ENCODE measurements at regions of chr2 and their contacts with region 1.

Region 1: DNA sequence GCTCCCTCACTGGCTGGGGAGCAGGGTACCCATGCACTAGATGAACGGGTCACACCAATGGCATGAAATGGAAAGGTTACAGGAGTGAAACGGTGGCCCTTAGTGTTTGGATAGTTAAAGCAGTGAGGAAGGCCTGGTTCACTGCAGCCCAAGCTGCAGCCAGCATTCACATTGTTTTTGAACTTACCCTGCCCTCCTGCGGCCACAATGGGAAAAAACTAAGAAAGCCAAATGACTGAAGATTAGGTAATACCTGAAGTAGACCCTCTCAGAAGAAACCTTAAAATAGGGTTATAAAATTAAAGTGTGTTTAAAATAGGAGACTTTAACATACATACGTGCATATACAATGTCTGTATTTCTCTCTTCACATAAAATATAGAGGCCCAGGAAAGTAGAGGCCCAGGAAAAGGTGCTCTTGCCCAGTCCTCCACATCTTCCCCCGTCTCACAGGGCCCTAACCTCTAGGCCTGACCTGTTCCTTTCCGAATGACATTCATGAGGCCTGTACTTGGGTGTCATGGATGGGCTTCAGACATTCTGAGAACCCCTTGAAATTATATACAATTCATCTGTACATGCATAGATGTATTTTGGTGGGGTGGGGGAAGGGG is 33.3 kb downstream of the DOK1 start:
- DNase-seq: peak; percentile 48 to 62 (median 60)
- ATAC-seq: peak; percentile 71 to 92 (median 92)
- H3K4me3 ChIP-seq: no peak overlapping the region
- H3K27ac ChIP-seq: no peak overlapping the region
- H3K4me1 ChIP-seq: peaks cover 0 to 37% (median 0%) of the 10 kb centered on the region in 12 donors
- H3K27me3 ChIP-seq: peaks cover 0 to 34% (median 8%) of the 10 kb centered on the region in 9 donors
- CTCF ChIP-seq: peak; percentile 48 to 85 (median 74)
- POLR2A ChIP-seq: no peak

Region 2: DNA sequence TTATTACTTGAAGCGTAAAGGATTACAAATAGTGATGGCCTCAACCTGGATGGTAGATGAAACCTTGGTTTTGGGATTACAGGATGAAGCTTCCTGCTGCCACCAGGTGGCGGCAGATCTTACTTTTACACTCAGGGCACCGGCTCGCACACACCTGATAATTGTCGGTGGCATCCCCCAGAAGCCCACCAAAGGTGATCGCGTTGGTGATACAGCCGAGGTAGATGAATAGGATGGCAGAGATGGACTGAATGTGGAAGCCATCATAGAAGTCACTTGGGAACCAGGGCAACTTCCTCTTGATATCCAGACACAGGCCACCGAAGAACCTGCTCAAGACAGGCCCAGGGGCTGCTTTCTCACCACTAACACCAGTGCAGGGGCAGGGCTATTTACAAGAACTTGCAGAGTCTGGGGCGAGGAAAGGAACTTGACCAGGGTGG is 337.6 kb before region 1 on chr2:
- intact Hi-C with region 1: loop called in 1 of 10 experiments (anchors 5 kb)
- DNase-seq: peak in 2 of 5 donors; percentile 31 to 50
- ATAC-seq: peak in 2 of 4 donors; percentile 38 to 51
- H3K4me3 ChIP-seq: no peak overlapping the region
- H3K27ac ChIP-seq: no peak overlapping the region
- H3K4me1 ChIP-seq: peaks cover 0 to 13% (median 2%) of the 10 kb centered on the region in 12 donors
- H3K27me3 ChIP-seq: no peaks in the 10 kb centered on the region
- CTCF ChIP-seq: peak; percentile 62 to 87 (median 74)
- POLR2A ChIP-seq: no peak

Region 3: GRCh38 chr2:74482801-74483674 is 104.7 kb before region 1 on chr2 and contains the starts of genes CCDC142 and TTC31:
- intact Hi-C with region 1: loop called (anchors 1 to 5 kb)
- DNase-seq: peak; percentile 96 to 97 (median 97)
- ATAC-seq: peak; percentile 98 to 99 (median 98)
- H3K4me3 ChIP-seq: peak within 1 kb of the TSS; percentile 71 to 98 (median 88)
- H3K27ac ChIP-seq: peak within 1 kb of the TSS; percentile 73 to 97 (median 92)
- H3K4me1 ChIP-seq: peaks cover 5 to 31% (median 25%) of the 10 kb centered on the region in 12 donors
- H3K27me3 ChIP-seq: no peaks in the 10 kb centered on the region
- CTCF ChIP-seq: peak; percentile 77 to 97 (median 88)
- POLR2A ChIP-seq: peak in 1 of 2 donors; percentile 37
- total RNA-seq, gene CCDC142: 4.4 to 13.4 (median 7.1) TPM
- total RNA-seq, gene TTC31: 7.1 to 14.2 (median 10.0) TPM

Region 4: DNA sequence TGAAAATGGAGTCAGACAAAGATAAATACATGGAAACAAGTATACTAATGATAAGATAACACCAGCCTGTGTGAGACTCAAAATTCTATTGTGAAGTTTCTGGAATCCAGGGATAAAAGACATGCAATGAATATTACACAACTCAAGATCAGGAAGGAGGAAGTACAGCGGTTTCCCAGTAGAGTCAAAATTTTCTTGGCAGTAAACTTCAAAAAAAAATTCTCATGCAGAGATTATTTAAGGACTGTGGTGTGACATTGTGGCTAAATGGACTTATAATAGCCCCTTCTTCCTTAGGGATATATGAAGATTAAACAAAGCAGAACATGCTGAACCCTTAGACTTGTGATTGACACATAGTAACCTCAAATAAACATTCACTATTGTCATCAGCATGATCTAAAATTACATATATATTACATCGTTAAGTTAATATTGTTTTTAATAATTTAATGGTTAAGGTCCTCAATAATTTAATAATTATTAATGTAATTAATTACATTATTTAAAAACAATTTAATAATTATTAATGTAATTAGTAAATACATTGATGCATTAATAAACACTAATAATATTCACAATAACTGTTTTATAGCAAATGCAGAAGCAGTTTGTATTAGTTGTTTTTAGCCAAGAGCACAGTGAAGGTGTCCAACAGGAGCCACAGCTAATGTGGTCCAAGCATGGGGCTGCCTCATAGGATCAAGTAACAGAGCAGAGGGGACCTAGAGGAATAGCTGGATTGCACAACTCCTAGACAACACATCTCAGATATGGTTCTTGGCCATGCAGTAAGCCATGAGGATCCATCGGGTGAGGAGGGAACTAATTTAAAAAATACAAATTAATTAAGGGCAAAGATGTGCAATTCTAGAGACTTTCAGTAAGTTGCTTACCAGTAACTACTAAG is 447.9 kb after region 1 on chr2:
- intact Hi-C with region 1: no loop called
- DNase-seq: no peak
- ATAC-seq: peak; percentile 45 to 81 (median 76)
- H3K4me3 ChIP-seq: no peak overlapping the region
- H3K27ac ChIP-seq: peak overlapping the region in 10 of 12 donors; percentile 36 to 67 (median 53)
- H3K4me1 ChIP-seq: peaks cover 0 to 35% (median 14%) of the 10 kb centered on the region in 12 donors
- H3K27me3 ChIP-seq: no peaks in the 10 kb centered on the region
- CTCF ChIP-seq: no peak
- POLR2A ChIP-seq: no peak